ENCODE measurements at regions of chr7 and their contacts with region 1.

Region 1: GRCh38 chr7:139328375-139328774 is 12.8 kb upstream of the FMC1 start:
- DNase-seq: peak; percentile 67
- H3K4me3 ChIP-seq: no peak overlapping the region
- CTCF ChIP-seq: no peak

Region 2: DNA sequence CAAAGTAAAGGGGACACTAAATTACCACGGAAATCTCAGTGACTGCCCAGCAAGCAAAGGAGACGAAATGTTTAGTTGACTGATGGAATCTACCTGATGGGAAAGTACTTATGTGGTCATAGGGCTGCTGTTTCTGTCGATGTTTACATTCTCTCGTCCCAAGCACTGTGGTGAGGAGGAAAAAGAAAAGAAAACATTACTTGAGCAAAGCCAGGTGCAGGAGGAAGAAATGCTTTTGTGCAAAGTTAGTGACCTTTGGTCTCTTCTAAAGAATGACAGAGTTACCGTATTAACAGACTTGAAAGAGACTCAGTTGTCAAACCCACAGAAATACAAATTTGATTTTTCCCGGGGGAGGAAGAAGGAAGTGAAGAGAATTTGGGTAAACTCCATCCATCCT is 30.6 kb before region 1 on chr7:
- CTCF ChIA-PET with region 1: no interaction called
- POLR2A ChIA-PET with region 1: no interaction called
- DNase-seq: no peak
- H3K4me3 ChIP-seq: no peak overlapping the region
- CTCF ChIP-seq: no peak

Region 3: DNA sequence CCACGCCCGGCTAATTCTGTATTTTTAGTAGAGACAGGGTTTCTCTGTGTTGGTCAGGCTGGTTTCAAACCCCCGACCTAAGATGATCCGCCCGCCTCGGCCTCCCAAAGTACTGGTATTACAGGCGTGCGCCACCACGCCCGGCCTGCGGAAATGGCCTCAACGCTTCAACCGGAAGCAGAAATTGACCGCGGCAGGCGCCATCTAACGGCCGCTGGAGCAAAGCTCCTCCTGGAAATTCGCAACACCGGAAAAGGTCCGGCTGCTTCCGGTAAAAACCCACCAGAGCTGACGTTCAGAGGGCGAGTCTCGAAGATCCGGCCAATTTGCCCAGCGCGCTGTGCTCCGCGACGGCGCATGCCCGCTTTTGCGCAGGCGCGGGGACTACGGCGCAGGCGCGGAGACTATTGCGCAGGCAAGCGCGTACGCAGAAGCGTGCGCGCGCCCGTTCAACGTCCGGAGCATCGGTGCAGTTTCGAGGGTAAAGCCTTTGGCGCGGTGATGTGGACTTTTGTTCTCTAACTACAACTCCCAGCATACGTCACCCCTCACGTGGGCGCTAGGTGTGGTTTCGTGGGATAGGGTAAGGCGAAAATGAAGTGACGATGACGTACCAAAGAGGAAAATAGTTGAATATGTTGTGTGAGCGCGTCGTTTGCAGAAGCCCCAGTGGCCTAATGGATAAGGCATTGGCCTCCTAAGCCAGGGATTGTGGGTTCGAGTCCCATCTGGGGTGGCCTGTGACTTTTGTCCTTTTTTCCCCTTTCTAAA is 11.8 kb after region 1 on chr7:
- CTCF ChIA-PET with region 1: interaction called, 16 read pairs
- POLR2A ChIA-PET with region 1: no interaction called
- DNase-seq: peak; percentile 95
- H3K4me3 ChIP-seq: peak overlapping the region; percentile 97
- CTCF ChIP-seq: peak; percentile 79